ENCODE measurements at regions of chr6 and their contacts with region 1.

Region 1: GRCh38 chr6:52664186-52664990 is 6.5 kb upstream of the TMEM14A start:
- DNase-seq: peak; percentile 88 to 95 (median 90)
- ATAC-seq: peak; percentile 92 to 99 (median 98)
- H3K4me3 ChIP-seq: peak overlapping the region; percentile 44 to 88 (median 75)
- H3K27ac ChIP-seq: peak overlapping the region in 11 of 12 donors; percentile 33 to 85 (median 66)
- H3K4me1 ChIP-seq: peaks cover 0 to 36% (median 8%) of the 10 kb centered on the region in 12 donors
- H3K27me3 ChIP-seq: peaks cover 0 to 7% (median 0%) of the 10 kb centered on the region in 9 donors
- CTCF ChIP-seq: no peak
- POLR2A ChIP-seq: peak in 1 of 2 donors; percentile 96

Region 2: GRCh38 chr6:52271852-52272460 is 392.4 kb before region 1 on chr6:
- intact Hi-C with region 1: loop called in 1 of 10 experiments (anchors 10 kb)
- DNase-seq: peak in 1 of 5 donors; percentile 41
- ATAC-seq: peak in 3 of 4 donors; percentile 31 to 82 (median 33)
- H3K4me3 ChIP-seq: no peak overlapping the region
- H3K27ac ChIP-seq: peak overlapping the region in 7 of 12 donors; percentile 12 to 64 (median 40)
- H3K4me1 ChIP-seq: peaks cover 0 to 3% (median 0%) of the 10 kb centered on the region in 12 donors
- H3K27me3 ChIP-seq: no peaks in the 10 kb centered on the region
- CTCF ChIP-seq: no peak
- POLR2A ChIP-seq: no peak

Region 3: DNA sequence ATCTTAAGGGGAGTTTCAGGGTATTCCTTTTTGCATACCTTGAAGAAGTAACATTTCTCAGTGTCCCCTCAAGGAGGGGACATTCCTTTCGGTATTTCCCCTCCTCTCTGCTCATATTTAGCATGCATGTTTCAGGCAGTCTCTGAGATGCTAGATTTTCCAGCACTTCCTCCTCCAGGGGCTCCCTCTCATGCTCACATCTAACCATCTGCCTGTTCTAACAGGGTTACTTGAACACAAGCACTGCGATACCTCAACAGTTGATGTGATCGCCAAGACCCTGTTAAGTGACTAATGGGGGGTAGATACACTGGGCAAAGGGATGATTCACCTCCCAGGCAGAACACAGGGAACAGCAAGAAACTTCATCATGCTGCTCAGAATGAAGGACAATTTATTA is 367.0 kb before region 1 on chr6:
- intact Hi-C with region 1: loop called in 1 of 10 experiments (anchors 10 kb)
- DNase-seq: no peak
- ATAC-seq: no peak
- H3K4me3 ChIP-seq: no peak overlapping the region
- H3K27ac ChIP-seq: no peak overlapping the region
- H3K4me1 ChIP-seq: no peaks in the 10 kb centered on the region
- H3K27me3 ChIP-seq: no peaks in the 10 kb centered on the region
- CTCF ChIP-seq: no peak
- POLR2A ChIP-seq: no peak

Region 4: DNA sequence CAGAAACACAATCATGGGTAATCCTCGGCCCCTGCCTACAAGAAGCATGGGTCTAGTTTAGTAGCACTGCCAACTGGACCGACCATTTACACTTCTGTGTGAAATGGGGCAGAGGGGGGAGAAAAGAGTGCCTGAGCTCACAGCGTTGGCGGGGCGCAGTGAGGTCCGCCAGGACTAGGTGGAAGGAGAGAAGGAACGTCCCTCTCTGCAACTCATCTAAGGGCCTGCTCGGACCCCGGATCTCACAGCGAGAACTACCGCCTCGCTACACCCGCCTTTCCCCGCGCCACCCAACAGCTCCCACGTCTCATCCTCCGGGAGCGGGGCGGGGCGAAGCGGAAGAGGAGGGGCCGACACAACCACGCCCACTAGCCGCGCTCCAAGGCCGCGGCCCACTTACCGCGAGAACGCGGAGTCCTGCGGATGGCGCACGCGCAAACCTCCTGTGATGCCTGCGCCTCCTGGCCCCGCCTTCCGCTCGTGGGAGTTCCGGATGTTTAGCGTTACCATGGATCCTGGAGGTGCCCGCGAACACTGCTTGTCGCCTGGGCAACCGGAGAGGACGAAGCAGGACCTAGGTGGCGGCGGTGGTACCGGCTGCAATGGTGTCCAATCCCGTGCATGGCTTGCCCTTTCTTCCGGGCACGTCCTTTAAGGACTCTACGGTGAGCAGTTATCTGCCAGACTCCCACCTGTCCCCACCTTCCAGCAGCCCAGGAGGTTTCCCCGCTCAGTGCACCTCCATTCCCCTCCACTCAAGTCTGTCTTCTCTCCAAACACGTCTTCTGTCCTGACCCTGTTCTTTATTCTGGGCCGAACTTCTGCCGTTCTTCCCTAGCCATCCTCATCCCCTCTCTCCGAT is 244.3 kb before region 1 on chr6 and contains the start of gene EFHC1:
- intact Hi-C with region 1: loop called (anchors 1 to 2 kb)
- DNase-seq: peak; percentile 98 to 99 (median 99)
- ATAC-seq: peak; percentile 95 to 97 (median 96)
- H3K4me3 ChIP-seq: peak within 1 kb of the TSS; percentile 60 to 90 (median 80)
- H3K27ac ChIP-seq: peak within 1 kb of the TSS; percentile 14 to 93 (median 88)
- H3K4me1 ChIP-seq: peaks cover 0 to 50% (median 27%) of the 10 kb centered on the region in 12 donors
- H3K27me3 ChIP-seq: no peaks in the 10 kb centered on the region
- CTCF ChIP-seq: no peak
- POLR2A ChIP-seq: peak in 1 of 2 donors; percentile 93
- total RNA-seq, gene EFHC1: 2.8 to 14.4 (median 5.2) TPM

Region 5: DNA sequence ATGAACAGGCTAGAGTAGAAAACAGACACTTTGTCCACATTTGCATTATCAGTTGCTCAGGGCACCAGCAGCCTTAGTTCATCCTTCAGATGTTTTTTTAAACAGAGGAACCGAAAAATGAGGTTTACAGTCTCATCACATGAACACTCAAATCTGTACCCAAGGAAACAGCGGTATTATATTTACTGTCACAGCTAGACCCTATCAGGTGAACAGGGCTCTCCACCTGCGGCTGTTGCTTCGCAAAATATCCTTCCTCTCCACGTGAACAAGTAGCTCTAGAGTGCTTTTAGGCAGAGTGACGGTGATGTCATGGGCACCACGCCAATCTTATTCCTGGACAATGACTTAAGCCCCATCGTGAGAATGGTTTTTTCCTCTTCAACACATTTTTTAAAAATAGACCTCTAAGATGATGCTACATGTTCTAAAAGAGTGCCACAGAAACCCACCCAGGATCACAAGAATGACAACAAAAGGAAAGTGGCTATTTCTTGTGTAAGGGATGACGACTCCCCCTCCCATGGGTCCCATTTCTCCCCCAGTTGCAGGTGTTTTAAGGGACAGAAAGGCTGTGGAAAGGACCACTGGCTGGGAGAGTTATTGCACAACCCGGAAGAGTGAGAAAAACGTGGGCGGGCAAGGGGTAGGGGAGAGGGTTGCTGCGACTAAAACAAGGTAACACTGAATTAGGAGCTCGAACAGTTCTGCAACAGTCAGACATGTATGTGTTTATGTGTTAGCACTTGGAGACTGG is 166.6 kb before region 1 on chr6:
- intact Hi-C with region 1: loop called in 3 of 10 experiments (anchors 5 to 10 kb)
- DNase-seq: peak in 4 of 5 donors; percentile 69 to 79 (median 70)
- ATAC-seq: peak in 3 of 4 donors; percentile 27 to 49 (median 40)
- H3K4me3 ChIP-seq: no peak overlapping the region
- H3K27ac ChIP-seq: peak overlapping the region; percentile 57 to 97 (median 82)
- H3K4me1 ChIP-seq: peaks cover 0 to 57% (median 32%) of the 10 kb centered on the region in 12 donors
- H3K27me3 ChIP-seq: no peaks in the 10 kb centered on the region
- CTCF ChIP-seq: no peak
- POLR2A ChIP-seq: no peak

Region 6: GRCh38 chr6:52512199-52512598 is 152.2 kb before region 1 on chr6:
- intact Hi-C with region 1: no loop called
- DNase-seq: peak in 4 of 5 donors; percentile 59 to 80 (median 74)
- ATAC-seq: peak; percentile 86 to 97 (median 93)
- H3K4me3 ChIP-seq: no peak overlapping the region
- H3K27ac ChIP-seq: peak overlapping the region; percentile 8 to 92 (median 87)
- H3K4me1 ChIP-seq: peaks cover 6 to 80% (median 45%) of the 10 kb centered on the region in 12 donors
- H3K27me3 ChIP-seq: no peaks in the 10 kb centered on the region
- CTCF ChIP-seq: no peak
- POLR2A ChIP-seq: peak in 1 of 2 donors; percentile 20

Region 7: GRCh38 chr6:52598123-52598823 is 66.1 kb before region 1 on chr6:
- intact Hi-C with region 1: loop called in 5 of 10 experiments (anchors 5 kb)
- DNase-seq: peak; percentile 61 to 70 (median 67)
- ATAC-seq: peak; percentile 57 to 79 (median 68)
- H3K4me3 ChIP-seq: peak overlapping the region in 6 of 12 donors; percentile 20 to 50 (median 35)
- H3K27ac ChIP-seq: peak overlapping the region in 6 of 12 donors; percentile 8 to 56 (median 36)
- H3K4me1 ChIP-seq: peaks cover 0 to 51% (median 18%) of the 10 kb centered on the region in 12 donors
- H3K27me3 ChIP-seq: no peaks in the 10 kb centered on the region
- CTCF ChIP-seq: peak; percentile 44 to 77 (median 67)
- POLR2A ChIP-seq: no peak

Region 8: DNA sequence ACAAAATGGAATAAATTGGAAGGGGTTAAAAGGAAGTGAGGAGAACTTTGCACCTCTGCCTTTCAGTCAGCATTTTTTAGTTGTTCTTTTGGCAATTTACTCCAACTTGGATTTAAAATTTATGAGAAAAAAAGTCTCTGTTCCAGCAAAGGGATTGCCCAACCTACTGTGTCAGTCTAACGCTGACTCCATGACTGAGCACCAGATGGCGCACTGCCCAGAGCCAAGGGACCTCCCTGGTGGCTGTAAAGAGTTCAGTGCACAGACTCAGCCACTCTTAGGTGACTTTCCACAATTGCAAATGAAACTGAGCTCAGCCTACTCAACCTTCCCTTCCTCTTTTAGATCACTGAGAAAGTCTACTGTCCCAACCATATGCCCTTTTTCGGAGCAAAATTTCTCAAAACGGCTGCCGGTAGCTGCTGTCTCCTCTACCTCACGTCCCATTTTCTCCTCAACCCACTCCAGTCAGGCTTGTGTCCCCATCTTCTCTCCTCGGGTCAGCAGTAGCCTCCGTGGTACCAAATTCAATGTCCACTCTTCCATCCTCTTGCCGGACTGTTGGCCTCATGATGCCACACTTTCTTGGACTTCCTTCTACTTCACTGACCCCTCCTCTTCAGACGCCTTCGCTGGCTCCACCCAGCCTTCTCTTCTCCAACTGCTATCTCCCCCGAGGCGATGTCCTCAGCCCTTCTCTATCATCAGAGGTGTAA is 60.2 kb after region 1 on chr6:
- intact Hi-C with region 1: no loop called
- DNase-seq: peak; percentile 33 to 81 (median 71)
- ATAC-seq: peak in 3 of 4 donors; percentile 74 to 91 (median 91)
- H3K4me3 ChIP-seq: no peak overlapping the region
- H3K27ac ChIP-seq: peak overlapping the region in 3 of 12 donors; percentile 13 to 70 (median 25)
- H3K4me1 ChIP-seq: peaks cover 0 to 4% (median 0%) of the 10 kb centered on the region in 12 donors
- H3K27me3 ChIP-seq: no peaks in the 10 kb centered on the region
- CTCF ChIP-seq: peak in 9 of 12 donors; percentile 16 to 52 (median 41)
- POLR2A ChIP-seq: no peak

Region 9: GRCh38 chr6:52741872-52742271 is 77.5 kb after region 1 on chr6:
- intact Hi-C with region 1: no loop called
- DNase-seq: no peak
- ATAC-seq: no peak
- H3K4me3 ChIP-seq: no peak overlapping the region
- H3K27ac ChIP-seq: no peak overlapping the region
- H3K4me1 ChIP-seq: no peaks in the 10 kb centered on the region
- H3K27me3 ChIP-seq: no peaks in the 10 kb centered on the region
- CTCF ChIP-seq: no peak
- POLR2A ChIP-seq: no peak